ENCODE measurements at regions of chr21 and their contacts with region 1.

Region 1: GRCh38 chr21:42414928-42415769 is 11.4 kb downstream of the UBASH3A start:
- DNase-seq: peak; percentile 87
- ATAC-seq: peak; percentile 86
- H3K4me3 ChIP-seq: peak overlapping the region in 2 of 5 experiments; percentile 25 to 27
- H3K4me3 Mint-ChIP-seq: peak overlapping the region; percentile 77
- H3K27ac ChIP-seq: no peak overlapping the region
- H3K27ac Mint-ChIP-seq: peak overlapping the region; percentile 91
- H3K4me1 ChIP-seq: peaks cover 6 to 16% of the 10 kb centered on the region in 2 donors
- H3K4me1 Mint-ChIP-seq: peaks cover 32% of the 10 kb centered on the region
- H3K27me3 ChIP-seq: peaks cover 0 to 3% (median 1%) of the 10 kb centered on the region in 4 experiments
- H3K27me3 Mint-ChIP-seq: peaks cover 11% of the 10 kb centered on the region
- CTCF ChIP-seq: no peak

Region 2: GRCh38 chr21:42366321-42367009 is 48.7 kb before region 1 on chr21 and contains the start of gene TFF1:
- CTCF ChIA-PET with region 1: no interaction called
- POLR2A ChIA-PET with region 1: no interaction called
- intact Hi-C with region 1: no loop called
- DNase-seq: no peak
- ATAC-seq: no peak
- H3K4me3 ChIP-seq: no peak within 1 kb of the TSS
- H3K4me3 Mint-ChIP-seq: no peak within 1 kb of the TSS
- H3K27ac ChIP-seq: no peak within 1 kb of the TSS
- H3K27ac Mint-ChIP-seq: peak within 1 kb of the TSS; percentile 20
- H3K4me1 ChIP-seq: no peaks in the 10 kb centered on the region
- H3K4me1 Mint-ChIP-seq: no peaks in the 10 kb centered on the region
- H3K27me3 ChIP-seq: peaks cover 0 to 2% (median 1%) of the 10 kb centered on the region in 4 experiments
- H3K27me3 Mint-ChIP-seq: peaks cover 45% of the 10 kb centered on the region
- CTCF ChIP-seq: no peak
- total RNA-seq, gene TFF1: not detected in 2 replicates

Region 3: GRCh38 chr21:42467140-42467983 is 52.2 kb after region 1 on chr21:
- CTCF ChIA-PET with region 1: no interaction called
- POLR2A ChIA-PET with region 1: no interaction called
- intact Hi-C with region 1: loop called (anchors 5 kb)
- DNase-seq: peak; percentile 50
- ATAC-seq: no peak
- H3K4me3 ChIP-seq: no peak overlapping the region
- H3K4me3 Mint-ChIP-seq: no peak overlapping the region
- H3K27ac ChIP-seq: no peak overlapping the region
- H3K27ac Mint-ChIP-seq: peak overlapping the region; percentile 23
- H3K4me1 ChIP-seq: peaks cover 47 to 67% of the 10 kb centered on the region in 2 donors
- H3K4me1 Mint-ChIP-seq: peaks cover 53% of the 10 kb centered on the region
- H3K27me3 ChIP-seq: peaks cover 0 to 12% (median 0%) of the 10 kb centered on the region in 4 experiments
- H3K27me3 Mint-ChIP-seq: peaks cover 9% of the 10 kb centered on the region
- CTCF ChIP-seq: no peak

Measured in B cell (primary cell).